Activated CD4-positive, alpha-beta T cell treated with anti-CD3 and anti-CD28 coated beads, Interleukin-2, amount 10 ng/mL, durations not matched to agents 24 days and 14 days (primary cell): ENCODE measurements at regions of chr2 and their contacts with region 1.

Region 1: GRCh38 chr2:191150600-191151330 is at the start of gene STAT4:
- DNase-seq: peak; percentile 94
- H3K4me3 Mint-ChIP-seq: peak within 1 kb of the TSS; percentile 91
- H3K27ac Mint-ChIP-seq: peak within 1 kb of the TSS; percentile 92
- H3K4me1 Mint-ChIP-seq: peaks cover 65% of the 10 kb centered on the region
- H3K27me3 Mint-ChIP-seq: no peaks in the 10 kb centered on the region
- total RNA-seq, gene STAT4: 47.9 and 50.8 TPM in 2 replicates

Region 2: DNA sequence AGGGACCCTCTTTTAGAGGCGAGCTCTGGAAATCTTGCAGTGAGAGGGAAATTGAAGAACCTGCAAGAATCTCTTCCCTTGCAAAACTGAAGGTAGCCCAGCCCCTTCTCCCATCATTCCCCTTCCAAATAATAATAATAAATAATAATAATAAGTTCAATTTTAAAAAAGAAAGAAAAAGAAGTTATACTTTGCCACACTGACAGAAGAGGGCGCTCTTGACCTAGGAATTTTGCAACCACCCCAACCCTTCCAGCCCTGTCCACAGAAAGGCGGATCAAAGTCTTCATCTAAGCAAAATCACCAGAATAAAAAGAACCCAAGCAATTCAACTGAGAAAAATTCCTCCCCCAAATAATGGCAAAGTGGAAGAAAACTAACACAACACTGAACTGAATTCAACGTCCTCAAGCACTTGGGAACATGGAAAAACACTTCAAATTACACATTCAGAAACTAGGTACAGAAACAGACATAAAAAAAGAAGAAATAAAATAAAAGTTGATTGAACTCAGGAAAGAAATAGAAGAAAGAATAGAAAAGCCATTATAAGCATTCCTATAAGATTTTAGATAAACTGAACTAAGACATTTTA is 369.1 kb before region 1 on chr2:
- intact Hi-C with region 1: loop called (anchors 5 kb)
- DNase-seq: peak; percentile 85
- H3K4me3 Mint-ChIP-seq: no peak overlapping the region
- H3K27ac Mint-ChIP-seq: no peak overlapping the region
- H3K4me1 Mint-ChIP-seq: peaks cover 38% of the 10 kb centered on the region
- H3K27me3 Mint-ChIP-seq: no peaks in the 10 kb centered on the region

Region 3: DNA sequence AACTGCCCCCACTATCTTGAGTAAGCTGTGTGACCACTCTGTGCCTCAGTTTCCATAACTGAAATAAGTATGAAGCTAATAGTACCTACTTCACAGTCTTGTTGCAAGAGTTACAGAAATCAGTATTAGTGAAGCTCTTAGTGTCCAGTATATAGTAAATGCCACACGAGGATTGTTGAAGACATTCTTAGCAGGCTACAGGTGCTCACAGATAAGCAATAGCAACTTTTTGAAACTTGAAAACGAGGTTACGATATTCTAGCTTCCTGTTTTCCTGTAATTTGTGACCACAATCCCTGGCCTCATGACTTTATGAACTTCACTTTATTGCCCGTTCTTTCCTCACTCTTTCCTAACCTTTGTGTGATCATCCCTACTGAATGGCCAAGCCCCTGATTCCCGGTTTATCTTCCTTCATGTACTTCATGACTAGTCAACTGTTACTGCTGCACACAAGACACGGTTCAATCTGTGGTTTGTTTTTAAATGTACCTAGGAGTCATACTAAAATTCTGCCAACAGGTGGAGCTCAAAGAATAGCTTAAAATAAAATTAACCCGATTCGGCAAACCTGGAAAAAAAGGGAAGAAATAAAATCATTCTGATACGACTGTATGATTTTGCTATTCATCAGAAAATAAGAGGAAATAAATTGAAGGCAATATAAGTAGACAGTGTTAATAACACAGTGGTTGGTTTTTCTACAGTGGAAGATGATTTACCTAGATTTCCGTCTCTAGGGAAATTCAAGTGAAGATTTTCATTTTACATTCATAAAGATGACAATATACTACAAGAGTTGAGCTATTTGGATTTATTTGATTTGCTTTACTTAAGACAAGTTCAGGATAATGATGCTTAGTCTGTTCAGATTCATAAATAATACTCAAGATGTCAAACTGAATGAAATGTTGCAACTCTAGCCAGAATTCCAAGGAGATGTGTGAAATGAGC is 98.7 kb before region 1 on chr2:
- intact Hi-C with region 1: loop called (anchors 1 kb)
- DNase-seq: peak; percentile 80
- H3K4me3 Mint-ChIP-seq: no peak overlapping the region
- H3K27ac Mint-ChIP-seq: no peak overlapping the region
- H3K4me1 Mint-ChIP-seq: peaks cover 22% of the 10 kb centered on the region
- H3K27me3 Mint-ChIP-seq: no peaks in the 10 kb centered on the region

Region 4: GRCh38 chr2:191078165-191078867 is 72.4 kb before region 1 on chr2:
- intact Hi-C with region 1: loop called (anchors 1 kb)
- DNase-seq: no peak
- H3K4me3 Mint-ChIP-seq: peak overlapping the region; percentile 79
- H3K27ac Mint-ChIP-seq: peak overlapping the region; percentile 90
- H3K4me1 Mint-ChIP-seq: peaks cover 27% of the 10 kb centered on the region
- H3K27me3 Mint-ChIP-seq: no peaks in the 10 kb centered on the region

Region 5: DNA sequence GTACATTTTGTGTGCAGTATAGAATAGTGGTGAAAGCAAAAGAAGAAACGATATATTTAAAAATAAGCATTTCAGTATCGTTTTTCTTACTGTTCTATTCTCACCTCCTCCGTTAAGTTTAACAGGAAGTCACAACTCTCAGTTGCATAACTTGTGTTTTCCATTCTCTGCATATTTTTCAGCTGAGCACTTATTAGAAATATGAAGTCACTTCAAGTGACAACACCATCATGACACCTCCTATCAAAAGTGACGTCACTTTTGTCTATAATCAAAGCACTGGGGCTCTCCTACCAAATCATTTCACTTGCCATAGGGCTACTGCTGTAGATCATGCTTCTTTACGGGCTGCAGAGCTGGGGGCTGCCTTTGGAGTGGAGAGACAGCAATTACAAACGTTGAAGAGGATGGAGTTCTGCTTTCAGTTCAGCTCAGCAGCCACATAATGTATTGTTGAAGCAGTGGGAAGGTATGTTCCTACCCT is 36.3 kb before region 1 on chr2:
- intact Hi-C with region 1: loop called (anchors 1 kb)
- DNase-seq: peak; percentile 82
- H3K4me3 Mint-ChIP-seq: peak overlapping the region; percentile 60
- H3K27ac Mint-ChIP-seq: peak overlapping the region; percentile 92
- H3K4me1 Mint-ChIP-seq: peaks cover 55% of the 10 kb centered on the region
- H3K27me3 Mint-ChIP-seq: no peaks in the 10 kb centered on the region

Region 6: DNA sequence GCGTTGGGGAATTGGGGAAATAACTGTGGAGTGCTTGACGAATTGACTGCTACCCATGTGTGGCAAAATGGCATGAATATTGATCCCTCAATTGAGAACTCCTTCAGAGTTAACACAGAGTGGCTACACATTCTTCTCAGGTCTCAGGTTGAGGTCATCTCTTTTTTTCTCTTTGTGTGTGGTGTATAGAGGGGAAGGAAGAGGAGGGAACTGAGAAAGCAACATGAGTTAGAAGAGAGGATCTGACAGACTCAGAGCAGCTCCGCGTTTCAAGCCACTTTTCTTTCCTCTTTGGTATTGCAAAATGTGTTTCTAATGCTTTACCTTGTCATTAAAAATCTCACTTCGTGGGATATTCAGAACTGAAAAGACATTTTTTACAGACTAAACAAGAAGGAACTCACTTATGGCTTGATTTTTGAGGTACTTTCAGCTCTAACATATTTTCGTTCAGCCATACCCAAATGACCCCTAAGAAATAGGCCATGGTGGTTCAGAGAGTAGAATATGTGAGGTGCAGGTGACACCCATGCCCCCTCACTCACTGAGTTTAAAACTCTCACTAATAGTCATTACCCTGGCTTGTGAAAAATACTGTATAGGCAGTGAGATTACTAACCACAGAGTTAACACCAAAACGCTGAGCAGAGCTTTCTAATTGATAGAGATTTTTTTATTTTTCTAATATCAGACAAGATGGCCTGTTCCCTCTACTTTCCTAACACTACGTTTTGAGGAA is 22.4 kb before region 1 on chr2:
- intact Hi-C with region 1: loop called (anchors 1 kb)
- DNase-seq: peak; percentile 63
- H3K4me3 Mint-ChIP-seq: peak overlapping the region; percentile 55
- H3K27ac Mint-ChIP-seq: peak overlapping the region; percentile 1
- H3K4me1 Mint-ChIP-seq: peaks cover 56% of the 10 kb centered on the region
- H3K27me3 Mint-ChIP-seq: no peaks in the 10 kb centered on the region

Region 7: DNA sequence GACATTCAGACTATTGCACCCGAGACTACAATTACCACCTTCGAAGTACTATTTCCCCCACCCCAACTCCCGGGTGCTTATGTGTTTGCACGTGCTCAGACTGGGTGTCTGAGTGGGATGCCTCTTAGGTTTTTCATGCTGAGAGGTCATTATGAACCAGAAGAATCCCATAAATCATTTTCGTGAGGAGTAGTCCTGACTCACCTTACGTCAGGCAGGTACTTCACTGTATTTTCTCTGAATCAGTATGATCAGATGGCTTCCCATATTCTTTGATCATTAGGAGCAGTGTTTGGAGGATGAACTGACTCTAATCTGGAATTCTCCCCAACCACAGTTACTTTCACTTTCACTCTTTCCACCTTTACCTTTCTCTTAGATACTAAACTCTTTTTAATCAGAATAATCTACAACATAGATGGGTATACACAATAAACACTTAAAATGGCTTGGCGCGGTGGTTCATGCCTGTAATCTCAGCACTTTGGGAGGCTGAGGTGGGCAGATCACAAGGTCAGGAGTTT is 38.4 kb after region 1 on chr2:
- intact Hi-C with region 1: loop called (anchors 1 kb)
- DNase-seq: peak; percentile 56
- H3K4me3 Mint-ChIP-seq: peak overlapping the region; percentile 62
- H3K27ac Mint-ChIP-seq: peak overlapping the region; percentile 41
- H3K4me1 Mint-ChIP-seq: peaks cover 39% of the 10 kb centered on the region
- H3K27me3 Mint-ChIP-seq: no peaks in the 10 kb centered on the region

Region 8: GRCh38 chr2:191215666-191216065 is 64.9 kb after region 1 on chr2:
- intact Hi-C with region 1: no loop called
- DNase-seq: no peak
- H3K4me3 Mint-ChIP-seq: no peak overlapping the region
- H3K27ac Mint-ChIP-seq: no peak overlapping the region
- H3K4me1 Mint-ChIP-seq: peaks cover 27% of the 10 kb centered on the region
- H3K27me3 Mint-ChIP-seq: no peaks in the 10 kb centered on the region

Region 9: GRCh38 chr2:191486584-191487320 is 336.0 kb after region 1 on chr2:
- intact Hi-C with region 1: no loop called
- DNase-seq: no peak
- H3K4me3 Mint-ChIP-seq: no peak overlapping the region
- H3K27ac Mint-ChIP-seq: no peak overlapping the region
- H3K4me1 Mint-ChIP-seq: no peaks in the 10 kb centered on the region
- H3K27me3 Mint-ChIP-seq: peaks cover 10% of the 10 kb centered on the region